GM12878 (cell line): ENCODE measurements at regions of chr15 and their contacts with region 1.

Region 1: DNA sequence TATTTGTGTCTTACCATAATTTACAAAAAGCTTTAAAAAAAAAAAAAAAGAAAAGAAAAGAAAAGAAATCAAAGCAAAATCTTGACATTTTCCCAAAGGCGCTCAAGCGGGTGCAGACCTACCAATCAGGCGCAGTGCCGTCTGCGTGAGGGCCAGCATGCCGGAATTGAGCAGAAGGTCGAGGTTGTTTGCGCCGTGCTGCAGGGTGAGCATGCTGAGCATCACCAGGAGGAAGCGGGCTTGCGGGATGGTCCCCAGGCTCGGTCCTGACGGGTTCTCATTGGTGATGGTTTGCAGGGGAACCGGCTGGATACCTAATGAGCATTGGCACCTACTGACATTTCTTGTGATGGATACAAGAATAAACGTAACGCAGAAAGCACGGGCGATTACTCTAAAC is 93.9 kb downstream of the HERC2 start:
- DNase-seq: no peak
- ATAC-seq: no peak
- H3K4me3 ChIP-seq: no peak overlapping the region
- H3K27ac ChIP-seq: no peak overlapping the region
- H3K4me1 ChIP-seq: no peaks in the 10 kb centered on the region
- H3K27me3 ChIP-seq: no peaks in the 10 kb centered on the region
- CTCF ChIP-seq: no peak
- EP300 ChIP-seq: no peak
- POLR2A ChIP-seq: no peak
- RAD21 ChIP-seq: no peak

Region 2: DNA sequence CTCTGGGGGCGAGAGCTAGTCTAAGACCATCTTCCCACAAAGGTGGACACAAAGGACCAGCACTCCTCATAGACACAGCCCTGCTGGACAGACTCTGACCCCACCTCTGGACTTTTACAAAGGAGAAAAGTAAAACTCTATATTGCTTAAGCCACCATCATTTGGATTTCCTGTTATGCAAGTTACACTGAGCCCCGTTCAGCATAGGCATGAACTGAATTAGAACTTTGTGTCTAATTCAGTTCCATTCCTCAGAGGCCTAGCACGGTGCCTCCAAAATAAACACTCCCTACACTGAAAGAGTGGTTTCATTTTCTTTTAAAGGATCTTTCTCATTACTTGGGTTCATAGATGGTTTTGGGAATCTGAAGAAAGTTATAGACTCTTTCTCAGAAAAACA is 49.8 kb before region 1 on chr15:
- CTCF ChIA-PET with region 1: no interaction called
- POLR2A ChIA-PET with region 1: no interaction called
- RAD21 ChIA-PET with region 1: no interaction called
- SMC1A ChIA-PET with region 1: no interaction called
- in situ Hi-C with region 1: loop called (anchors 10 kb)
- intact Hi-C with region 1: no loop called
- DNase-seq: no peak
- ATAC-seq: no peak
- H3K4me3 ChIP-seq: no peak overlapping the region
- H3K27ac ChIP-seq: no peak overlapping the region
- H3K4me1 ChIP-seq: no peaks in the 10 kb centered on the region
- H3K27me3 ChIP-seq: no peaks in the 10 kb centered on the region
- CTCF ChIP-seq: no peak
- EP300 ChIP-seq: no peak
- POLR2A ChIP-seq: no peak
- RAD21 ChIP-seq: no peak

Region 3: GRCh38 chr15:28252831-28253230 is 24.7 kb after region 1 on chr15:
- CTCF ChIA-PET with region 1: no interaction called
- POLR2A ChIA-PET with region 1: no interaction called
- RAD21 ChIA-PET with region 1: no interaction called
- SMC1A ChIA-PET with region 1: no interaction called
- in situ Hi-C with region 1: no loop called
- intact Hi-C with region 1: no loop called
- DNase-seq: no peak
- ATAC-seq: peak; percentile 43
- H3K4me3 ChIP-seq: no peak overlapping the region
- H3K27ac ChIP-seq: no peak overlapping the region; the same call in 1 of the 2 replicates
- H3K4me1 ChIP-seq: no peaks in the 10 kb centered on the region
- H3K27me3 ChIP-seq: no peaks in the 10 kb centered on the region
- CTCF ChIP-seq: no peak
- EP300 ChIP-seq: no peak
- POLR2A ChIP-seq: no peak
- RAD21 ChIP-seq: no peak